ENCODE measurements at regions of chr9 and their contacts with region 1.

Region 1: DNA sequence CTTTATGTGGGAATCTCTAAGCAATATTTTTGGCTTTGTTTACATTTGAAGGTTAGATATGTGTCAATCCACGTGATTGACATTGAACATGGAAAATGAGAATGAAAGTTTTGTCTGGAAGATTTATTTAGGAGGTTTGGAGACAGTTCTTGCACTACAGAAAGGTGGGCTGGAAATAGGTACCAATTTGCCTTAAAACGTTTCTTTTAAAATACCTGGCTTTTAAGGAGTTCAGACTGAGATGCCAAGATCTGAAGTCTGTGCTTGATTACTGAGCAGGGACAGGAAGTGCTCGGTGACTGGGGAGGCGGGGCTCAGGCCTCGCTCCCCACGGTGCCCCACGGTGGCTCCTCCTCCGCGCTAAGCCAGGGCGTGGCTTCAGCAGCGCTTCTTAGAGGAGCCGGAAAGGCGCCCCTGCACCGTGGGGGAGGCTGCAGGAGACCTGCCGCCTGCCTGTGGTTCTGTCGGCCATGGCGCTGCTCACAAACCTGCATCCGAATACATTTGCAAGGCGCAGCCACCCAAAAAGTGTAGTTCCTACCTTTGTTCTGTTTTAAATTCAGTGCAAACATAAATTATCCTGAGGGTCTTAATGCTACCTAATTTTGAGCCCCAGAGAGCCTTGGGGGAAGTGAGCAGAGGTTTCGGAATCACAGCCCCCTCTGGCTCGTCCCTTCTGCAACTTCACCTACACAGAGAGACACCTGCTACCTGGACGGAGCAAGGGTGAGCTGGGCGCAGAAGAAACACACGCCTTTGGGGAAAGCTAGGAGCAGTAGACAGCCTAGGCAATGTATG is 49.2 kb downstream of the USP20 start:
- DNase-seq: peak; percentile 93 to 99 (median 97)
- ATAC-seq: peak; percentile 55
- H3K4me3 ChIP-seq: peak overlapping the region; percentile 69
- H3K4me3 Mint-ChIP-seq: peak overlapping the region; percentile 96
- H3K27ac ChIP-seq: peak overlapping the region; percentile 91 to 99
- H3K27ac Mint-ChIP-seq: peak overlapping the region; percentile 99
- H3K4me1 ChIP-seq: peaks cover 72% of the 10 kb centered on the region
- H3K4me1 Mint-ChIP-seq: peaks cover 53% of the 10 kb centered on the region
- H3K27me3 ChIP-seq: no peaks in the 10 kb centered on the region
- H3K27me3 Mint-ChIP-seq: no peaks in the 10 kb centered on the region
- CTCF ChIP-seq: peak; percentile 31

Region 2: GRCh38 chr9:129823935-129824601 is 60.4 kb before region 1 on chr9 and contains the start of gene TOR1A:
- CTCF ChIA-PET with region 1: no interaction called
- POLR2A ChIA-PET with region 1: interaction called, 27 read pairs
- intact Hi-C with region 1: no loop called
- DNase-seq: peak; percentile 85 to 95 (median 90)
- ATAC-seq: peak; percentile 95
- H3K4me3 ChIP-seq: peak within 1 kb of the TSS; percentile 64
- H3K4me3 Mint-ChIP-seq: peak within 1 kb of the TSS; percentile 94
- H3K27ac ChIP-seq: peak within 1 kb of the TSS in 1 of 2 donors; percentile 46
- H3K27ac Mint-ChIP-seq: peak within 1 kb of the TSS; percentile 81
- H3K4me1 ChIP-seq: peaks cover 14% of the 10 kb centered on the region
- H3K4me1 Mint-ChIP-seq: peaks cover 12% of the 10 kb centered on the region
- H3K27me3 ChIP-seq: no peaks in the 10 kb centered on the region
- H3K27me3 Mint-ChIP-seq: no peaks in the 10 kb centered on the region
- CTCF ChIP-seq: no peak
- total RNA-seq, gene TOR1A: 12.6 to 13.9 TPM

Region 3: DNA sequence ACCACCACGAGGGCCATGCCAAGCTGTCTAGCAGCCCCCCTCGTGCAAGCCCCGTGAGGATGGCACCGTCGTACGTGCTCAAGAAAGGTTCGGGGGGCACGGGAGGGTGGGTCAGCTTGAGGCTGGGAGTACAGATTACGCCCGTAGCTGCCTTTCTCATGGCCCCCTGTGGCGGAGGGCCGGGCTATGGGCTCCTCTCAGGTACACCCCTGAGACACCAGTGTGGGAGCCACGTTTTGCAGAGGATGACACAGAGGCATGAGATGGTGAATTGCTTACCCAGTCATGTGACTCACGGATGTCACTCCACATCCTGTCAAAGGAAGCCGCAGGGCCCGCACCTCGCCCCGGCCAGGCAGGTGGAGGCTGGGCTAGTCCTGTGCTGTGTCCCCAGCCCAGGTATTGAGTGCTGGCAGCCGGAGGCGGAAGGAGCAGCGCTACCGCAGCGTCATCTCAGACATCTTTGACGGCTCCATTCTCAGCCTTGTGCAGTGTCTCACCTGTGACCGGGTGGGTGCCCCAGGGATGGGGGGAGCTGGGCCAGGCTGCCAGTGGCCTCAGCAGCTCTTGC is 15.4 kb before region 1 on chr9:
- CTCF ChIA-PET with region 1: interaction called, 10 read pairs
- POLR2A ChIA-PET with region 1: interaction called, 30 read pairs
- intact Hi-C with region 1: loop called (anchors 1 to 2 kb)
- DNase-seq: peak; percentile 85 to 98 (median 92)
- ATAC-seq: peak; percentile 87
- H3K4me3 ChIP-seq: peak overlapping the region; percentile 40
- H3K4me3 Mint-ChIP-seq: peak overlapping the region; percentile 59
- H3K27ac ChIP-seq: peak overlapping the region; percentile 93 to 96
- H3K27ac Mint-ChIP-seq: peak overlapping the region; percentile 86
- H3K4me1 ChIP-seq: peaks cover 94% of the 10 kb centered on the region
- H3K4me1 Mint-ChIP-seq: peaks cover 75% of the 10 kb centered on the region
- H3K27me3 ChIP-seq: no peaks in the 10 kb centered on the region
- H3K27me3 Mint-ChIP-seq: no peaks in the 10 kb centered on the region
- CTCF ChIP-seq: no peak

Region 4: DNA sequence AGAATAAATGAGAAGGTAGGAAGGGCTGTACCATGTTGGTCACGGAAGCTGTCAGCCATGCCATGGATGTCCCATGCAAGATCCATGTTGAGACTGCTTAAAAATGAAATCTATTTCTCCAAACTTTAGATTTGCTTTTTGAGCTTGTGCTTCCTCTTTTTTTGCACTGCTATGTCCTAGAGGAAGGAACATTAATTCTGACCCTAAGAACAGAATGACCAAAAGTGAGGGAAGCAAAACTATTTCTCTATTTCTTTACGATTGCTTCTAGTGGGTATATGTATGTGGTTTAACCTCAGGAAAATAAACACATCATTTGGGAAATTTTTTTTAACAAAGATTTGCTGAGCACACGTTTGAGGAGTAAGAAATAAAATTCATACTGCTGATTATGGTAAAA is 35.4 kb after region 1 on chr9:
- CTCF ChIA-PET with region 1: interaction called, 5 read pairs
- POLR2A ChIA-PET with region 1: interaction called, 5 read pairs
- intact Hi-C with region 1: loop called in 1 of 2 experiments (anchors 5 kb)
- DNase-seq: no peak
- ATAC-seq: no peak
- H3K4me3 ChIP-seq: no peak overlapping the region
- H3K4me3 Mint-ChIP-seq: no peak overlapping the region
- H3K27ac ChIP-seq: no peak overlapping the region
- H3K27ac Mint-ChIP-seq: peak overlapping the region; percentile 21
- H3K4me1 ChIP-seq: no peaks in the 10 kb centered on the region
- H3K4me1 Mint-ChIP-seq: peaks cover 33% of the 10 kb centered on the region
- H3K27me3 ChIP-seq: no peaks in the 10 kb centered on the region
- H3K27me3 Mint-ChIP-seq: no peaks in the 10 kb centered on the region
- CTCF ChIP-seq: no peak

Region 5: GRCh38 chr9:129962889-129963703 is 78.7 kb after region 1 on chr9:
- CTCF ChIA-PET with region 1: interaction called, 8 read pairs
- POLR2A ChIA-PET with region 1: interaction called, 55 read pairs
- intact Hi-C with region 1: loop called (anchors 1 to 5 kb)
- DNase-seq: peak; percentile 60 to 93 (median 66)
- ATAC-seq: peak; percentile 94
- H3K4me3 ChIP-seq: peak overlapping the region; percentile 64
- H3K4me3 Mint-ChIP-seq: peak overlapping the region; percentile 83
- H3K27ac ChIP-seq: peak overlapping the region; percentile 94 to 95
- H3K27ac Mint-ChIP-seq: peak overlapping the region; percentile 99
- H3K4me1 ChIP-seq: peaks cover 59% of the 10 kb centered on the region
- H3K4me1 Mint-ChIP-seq: peaks cover 80% of the 10 kb centered on the region
- H3K27me3 ChIP-seq: no peaks in the 10 kb centered on the region
- H3K27me3 Mint-ChIP-seq: no peaks in the 10 kb centered on the region
- CTCF ChIP-seq: no peak

Region 6: DNA sequence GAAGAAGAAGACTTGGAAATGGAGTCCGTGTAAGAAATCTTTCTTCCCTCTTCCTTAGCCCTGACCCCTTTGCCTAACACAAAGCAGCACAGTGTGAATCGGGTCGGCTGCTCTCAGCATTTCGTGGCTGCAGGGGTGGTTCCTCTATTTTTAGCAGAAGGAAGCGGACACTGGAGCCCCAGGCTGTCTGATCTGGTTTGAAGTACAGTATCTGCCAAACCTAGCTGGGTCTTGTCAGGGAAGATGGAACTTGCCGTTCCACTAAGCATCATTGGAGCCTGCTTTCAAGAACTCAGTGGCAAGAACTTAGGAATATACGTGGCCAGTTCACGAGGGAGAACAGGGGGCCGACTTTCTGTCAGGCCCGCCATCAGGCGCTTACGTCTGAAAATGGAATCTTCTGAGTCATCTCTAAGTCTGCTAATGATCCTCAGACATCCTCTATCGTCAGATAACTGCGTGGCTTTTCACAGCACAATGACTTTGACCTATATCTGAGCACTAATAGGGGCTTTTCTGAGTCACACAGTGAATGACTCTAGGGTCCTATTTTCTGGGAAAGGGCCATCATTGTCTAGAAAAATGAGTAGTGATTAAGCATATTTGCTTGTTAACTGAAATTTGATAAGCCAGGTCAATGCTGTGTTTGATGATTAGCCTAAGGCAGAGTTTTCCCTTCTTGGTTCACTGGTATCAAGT is 244.5 kb after region 1 on chr9:
- CTCF ChIA-PET with region 1: no interaction called
- POLR2A ChIA-PET with region 1: interaction called, 11 read pairs
- intact Hi-C with region 1: no loop called
- DNase-seq: peak; percentile 17 to 86 (median 44)
- ATAC-seq: peak; percentile 60
- H3K4me3 ChIP-seq: peak overlapping the region; percentile 24
- H3K4me3 Mint-ChIP-seq: peak overlapping the region; percentile 71
- H3K27ac ChIP-seq: peak overlapping the region; percentile 83 to 95
- H3K27ac Mint-ChIP-seq: peak overlapping the region; percentile 98
- H3K4me1 ChIP-seq: peaks cover 60% of the 10 kb centered on the region
- H3K4me1 Mint-ChIP-seq: peaks cover 57% of the 10 kb centered on the region
- H3K27me3 ChIP-seq: no peaks in the 10 kb centered on the region
- H3K27me3 Mint-ChIP-seq: no peaks in the 10 kb centered on the region
- CTCF ChIP-seq: no peak